CD4-positive, alpha-beta memory T cell (primary cell): ENCODE measurements at regions of chr10 and their contacts with region 1.

Region 1: GRCh38 chr10:119686439-119687191 is 35.4 kb downstream of the BAG3 start:
- DNase-seq: peak; percentile 76 to 85 (median 78)
- H3K4me3 ChIP-seq: peak overlapping the region in 1 of 2 donors; percentile 60
- H3K4me3 Mint-ChIP-seq: peak overlapping the region; percentile 70 to 84 (median 79)
- H3K27ac ChIP-seq: no peak overlapping the region
- H3K27ac Mint-ChIP-seq: peak overlapping the region; percentile 51 to 84 (median 77)
- H3K4me1 ChIP-seq: peaks cover 19% of the 10 kb centered on the region
- H3K4me1 Mint-ChIP-seq: peaks cover 7 to 22% (median 16%) of the 10 kb centered on the region in 4 donors
- H3K27me3 ChIP-seq: no peaks in the 10 kb centered on the region
- H3K27me3 Mint-ChIP-seq: peaks cover 1% of the 10 kb centered on the region in 2 donors

Region 2: GRCh38 chr10:119650692-119651513 is 35.7 kb before region 1 on chr10 and contains the start of gene BAG3:
- CTCF ChIA-PET with region 1: interaction called, 7 read pairs
- POLR2A ChIA-PET with region 1: interaction called, 6 read pairs
- intact Hi-C with region 1: loop called (anchors 2 kb)
- DNase-seq: peak; percentile 66 to 80 (median 68)
- H3K4me3 ChIP-seq: peak within 1 kb of the TSS; percentile 88 to 89
- H3K4me3 Mint-ChIP-seq: peak within 1 kb of the TSS; percentile 94 to 100 (median 96)
- H3K27ac ChIP-seq: peak within 1 kb of the TSS; percentile 87
- H3K27ac Mint-ChIP-seq: peak within 1 kb of the TSS; percentile 96 to 99 (median 96)
- H3K4me1 ChIP-seq: peaks cover 45% of the 10 kb centered on the region
- H3K4me1 Mint-ChIP-seq: peaks cover 36 to 45% (median 43%) of the 10 kb centered on the region in 4 donors
- H3K27me3 ChIP-seq: no peaks in the 10 kb centered on the region
- H3K27me3 Mint-ChIP-seq: peaks cover 0 to under 1% of the 10 kb centered on the region in 2 donors
- total RNA-seq, gene BAG3: 20.8 to 21.6 TPM

Region 3: GRCh38 chr10:119675483-119676170 is 11.0 kb before region 1 on chr10:
- CTCF ChIA-PET with region 1: interaction called, 16 read pairs
- POLR2A ChIA-PET with region 1: no interaction called
- intact Hi-C with region 1: no loop called
- DNase-seq: no peak
- H3K4me3 ChIP-seq: no peak overlapping the region
- H3K4me3 Mint-ChIP-seq: no peak overlapping the region
- H3K27ac ChIP-seq: no peak overlapping the region
- H3K27ac Mint-ChIP-seq: no peak overlapping the region
- H3K4me1 ChIP-seq: peaks cover 3% of the 10 kb centered on the region
- H3K4me1 Mint-ChIP-seq: peaks cover 0 to 9% (median 7%) of the 10 kb centered on the region in 4 donors
- H3K27me3 ChIP-seq: no peaks in the 10 kb centered on the region
- H3K27me3 Mint-ChIP-seq: no peaks in the 10 kb centered on the region

Region 4: DNA sequence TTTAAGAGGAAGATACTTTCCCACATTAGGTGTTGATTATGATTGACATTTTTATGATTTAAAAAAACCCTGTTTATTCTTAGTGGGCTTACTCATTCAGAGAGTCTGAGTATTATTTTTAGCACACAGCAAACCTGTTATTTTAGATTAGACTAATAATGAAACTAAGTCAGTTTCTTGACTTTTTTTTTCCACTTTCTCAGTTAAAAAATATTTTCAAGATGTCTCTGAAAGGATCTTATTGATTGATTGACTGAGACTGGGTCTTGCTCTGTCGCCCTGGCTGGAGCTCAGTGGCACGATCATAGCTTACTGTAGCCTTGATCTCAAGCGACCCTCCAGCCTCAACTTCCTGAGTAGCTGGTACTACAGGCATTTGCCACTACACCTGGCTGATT is 18.8 kb after region 1 on chr10:
- CTCF ChIA-PET with region 1: interaction called, 10 read pairs
- POLR2A ChIA-PET with region 1: interaction called, 3 read pairs
- intact Hi-C with region 1: no loop called
- DNase-seq: no peak
- H3K4me3 ChIP-seq: no peak overlapping the region
- H3K4me3 Mint-ChIP-seq: peak overlapping the region in 5 of 8 donors; percentile 18 to 59 (median 24)
- H3K27ac ChIP-seq: no peak overlapping the region
- H3K27ac Mint-ChIP-seq: peak overlapping the region in 1 of 7 donors; percentile 66
- H3K4me1 ChIP-seq: peaks cover 17% of the 10 kb centered on the region
- H3K4me1 Mint-ChIP-seq: peaks cover 6 to 15% (median 13%) of the 10 kb centered on the region in 4 donors
- H3K27me3 ChIP-seq: no peaks in the 10 kb centered on the region
- H3K27me3 Mint-ChIP-seq: peaks cover 2 to 7% of the 10 kb centered on the region in 2 donors

Region 5: GRCh38 chr10:119859420-119860258 is 173.0 kb after region 1 on chr10:
- CTCF ChIA-PET with region 1: interaction called, 105 read pairs
- POLR2A ChIA-PET with region 1: interaction called, 4 read pairs
- intact Hi-C with region 1: loop called (anchors 1 kb)
- DNase-seq: peak in 4 of 5 donors; percentile 45 to 52 (median 50)
- H3K4me3 ChIP-seq: no peak overlapping the region
- H3K4me3 Mint-ChIP-seq: no peak overlapping the region
- H3K27ac ChIP-seq: no peak overlapping the region
- H3K27ac Mint-ChIP-seq: peak overlapping the region in 6 of 7 donors; percentile 12 to 74 (median 24)
- H3K4me1 ChIP-seq: peaks cover 36% of the 10 kb centered on the region
- H3K4me1 Mint-ChIP-seq: peaks cover 26 to 50% (median 39%) of the 10 kb centered on the region in 4 donors
- H3K27me3 ChIP-seq: no peaks in the 10 kb centered on the region
- H3K27me3 Mint-ChIP-seq: no peaks in the 10 kb centered on the region